Psoas muscle (tissue), 8 donors: ENCODE measurements at regions of chrX and their contacts with region 1.

Region 1: GRCh38 chrX:16278927-16279326 is 111.6 kb downstream of the MAGEB17 start:
- DNase-seq: no peak
- ATAC-seq: no peak
- H3K4me3 ChIP-seq: no peak overlapping the region
- H3K27ac ChIP-seq: no peak overlapping the region
- H3K4me1 ChIP-seq: no peaks in the 10 kb centered on the region
- H3K27me3 ChIP-seq: no peaks in the 10 kb centered on the region
- CTCF ChIP-seq: no peak

Region 2: DNA sequence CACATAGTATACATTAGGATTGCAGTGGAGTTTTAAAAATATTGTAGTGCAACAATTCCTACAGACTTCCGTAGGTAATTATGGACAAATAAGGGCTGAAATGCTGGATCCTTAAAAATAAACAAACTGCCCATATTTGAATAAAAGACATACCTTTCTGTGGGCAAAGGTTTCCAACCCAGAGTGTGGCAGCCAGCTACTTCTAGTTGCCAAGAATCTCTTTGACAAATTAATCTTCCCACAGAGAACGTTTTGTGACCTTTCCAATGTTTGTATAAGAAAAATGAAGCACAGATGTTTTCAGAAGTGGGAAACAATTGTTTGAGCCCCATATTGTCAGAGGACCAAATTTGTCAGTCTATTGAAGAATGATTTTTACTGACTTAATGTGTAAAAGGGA is 134.5 kb before region 1 on chrX:
- intact Hi-C with region 1: loop called in 1 of 2 experiments (anchors 5 kb)
- DNase-seq: no peak
- ATAC-seq: no peak
- H3K4me3 ChIP-seq: no peak overlapping the region
- H3K27ac ChIP-seq: no peak overlapping the region
- H3K4me1 ChIP-seq: no peaks in the 10 kb centered on the region
- H3K27me3 ChIP-seq: peaks cover 0 to 17% (median 0%) of the 10 kb centered on the region in 3 donors
- CTCF ChIP-seq: no peak

Region 3: GRCh38 chrX:16670998-16671397 is 392.1 kb after region 1 on chrX:
- intact Hi-C with region 1: no loop called
- DNase-seq: no peak
- ATAC-seq: peak in 3 of 4 donors; percentile 43 to 77 (median 49)
- H3K4me3 ChIP-seq: no peak overlapping the region
- H3K27ac ChIP-seq: no peak overlapping the region
- H3K4me1 ChIP-seq: no peaks in the 10 kb centered on the region
- H3K27me3 ChIP-seq: peaks cover 0 to 2% (median 0%) of the 10 kb centered on the region in 3 donors
- CTCF ChIP-seq: peak; percentile 40

Region 4: DNA sequence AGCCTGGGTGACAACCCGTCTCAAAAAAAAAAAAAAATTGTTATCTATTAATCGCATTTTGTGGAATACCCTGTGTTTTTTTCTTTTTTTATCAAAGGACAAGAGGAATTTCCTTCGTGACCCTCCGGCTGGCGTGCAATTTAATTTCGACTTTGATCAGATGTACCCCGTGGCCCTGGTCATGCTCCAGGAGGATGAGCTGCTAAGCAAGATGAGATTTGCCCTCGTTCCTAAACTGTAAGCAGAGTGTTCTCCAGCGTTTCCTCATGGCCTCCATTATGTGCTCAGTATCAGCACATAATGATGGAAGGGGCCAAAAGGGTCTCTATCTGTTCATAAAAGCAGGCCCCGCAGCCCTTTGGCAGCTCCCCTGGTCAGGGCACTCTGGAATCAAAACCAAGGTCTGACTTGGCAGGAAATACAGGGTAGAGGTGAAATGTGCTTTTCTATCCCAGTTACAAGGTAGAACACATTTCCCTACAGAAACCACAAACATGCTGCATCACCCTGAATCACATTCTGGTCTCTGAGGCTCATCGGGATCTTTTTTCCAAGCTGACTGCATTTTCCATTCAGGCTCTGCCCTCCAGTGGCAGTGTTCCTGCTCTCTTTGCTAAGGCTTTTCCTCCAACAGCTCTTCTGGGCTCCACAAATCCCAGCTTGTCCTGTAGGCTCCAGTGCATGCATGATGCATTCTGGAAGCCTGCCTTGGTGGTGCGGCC is 464.8 kb after region 1 on chrX:
- intact Hi-C with region 1: no loop called
- DNase-seq: no peak
- ATAC-seq: peak in 1 of 4 donors; percentile 23
- H3K4me3 ChIP-seq: no peak overlapping the region
- H3K27ac ChIP-seq: no peak overlapping the region
- H3K4me1 ChIP-seq: no peaks in the 10 kb centered on the region
- H3K27me3 ChIP-seq: no peaks in the 10 kb centered on the region
- CTCF ChIP-seq: no peak